Panc1 (cell line): ENCODE measurements at regions of chr2 and their contacts with region 1.

Region 1: GRCh38 chr2:165401285-165401852 is 68.1 kb upstream of the CSRNP3 start:
- DNase-seq: peak; percentile 18
- ATAC-seq: no peak
- H3K4me3 ChIP-seq: no peak overlapping the region
- H3K27ac ChIP-seq: no peak overlapping the region
- H3K4me1 ChIP-seq: no peaks in the 10 kb centered on the region
- H3K27me3 ChIP-seq: no peaks in the 10 kb centered on the region
- CTCF ChIP-seq: peak; percentile 70; the same call in 1 of the 2 replicates

Region 2: GRCh38 chr2:164992818-164993217 is 408.6 kb before region 1 on chr2:
- CTCF ChIA-PET with region 1: no interaction called
- POLR2A ChIA-PET with region 1: no interaction called
- in situ Hi-C with region 1: no loop called
- intact Hi-C with region 1: loop called (anchors 5 kb)
- DNase-seq: peak; percentile 12
- ATAC-seq: peak; percentile 56; the same call in 1 of the 2 replicates
- H3K4me3 ChIP-seq: no peak overlapping the region
- H3K27ac ChIP-seq: no peak overlapping the region
- H3K4me1 ChIP-seq: no peaks in the 10 kb centered on the region
- H3K27me3 ChIP-seq: no peaks in the 10 kb centered on the region
- CTCF ChIP-seq: peak; percentile 35; the same call in 1 of the 2 replicates

Region 3: GRCh38 chr2:165022781-165023180 is 378.6 kb before region 1 on chr2:
- CTCF ChIA-PET with region 1: no interaction called
- POLR2A ChIA-PET with region 1: no interaction called
- in situ Hi-C with region 1: no loop called
- intact Hi-C with region 1: no loop called
- DNase-seq: no peak
- ATAC-seq: no peak
- H3K4me3 ChIP-seq: no peak overlapping the region
- H3K27ac ChIP-seq: no peak overlapping the region
- H3K4me1 ChIP-seq: no peaks in the 10 kb centered on the region
- H3K27me3 ChIP-seq: no peaks in the 10 kb centered on the region
- CTCF ChIP-seq: no peak

Region 4: GRCh38 chr2:165348441-165348840 is 52.9 kb before region 1 on chr2:
- CTCF ChIA-PET with region 1: no interaction called
- POLR2A ChIA-PET with region 1: no interaction called
- in situ Hi-C with region 1: no loop called
- intact Hi-C with region 1: no loop called
- DNase-seq: no peak
- ATAC-seq: no peak
- H3K4me3 ChIP-seq: no peak overlapping the region
- H3K27ac ChIP-seq: no peak overlapping the region
- H3K4me1 ChIP-seq: no peaks in the 10 kb centered on the region
- H3K27me3 ChIP-seq: no peaks in the 10 kb centered on the region
- CTCF ChIP-seq: no peak

Region 5: GRCh38 chr2:165361514-165361913 is 39.9 kb before region 1 on chr2:
- CTCF ChIA-PET with region 1: no interaction called
- POLR2A ChIA-PET with region 1: no interaction called
- in situ Hi-C with region 1: no loop called
- intact Hi-C with region 1: no loop called
- DNase-seq: no peak
- ATAC-seq: no peak
- H3K4me3 ChIP-seq: no peak overlapping the region
- H3K27ac ChIP-seq: no peak overlapping the region
- H3K4me1 ChIP-seq: no peaks in the 10 kb centered on the region
- H3K27me3 ChIP-seq: no peaks in the 10 kb centered on the region
- CTCF ChIP-seq: no peak

Region 6: GRCh38 chr2:165691615-165692014 is 290.2 kb after region 1 on chr2:
- CTCF ChIA-PET with region 1: no interaction called
- POLR2A ChIA-PET with region 1: no interaction called
- in situ Hi-C with region 1: no loop called
- intact Hi-C with region 1: loop called (anchors 5 kb)
- DNase-seq: no peak
- ATAC-seq: no peak
- H3K4me3 ChIP-seq: no peak overlapping the region
- H3K27ac ChIP-seq: no peak overlapping the region
- H3K4me1 ChIP-seq: no peaks in the 10 kb centered on the region
- H3K27me3 ChIP-seq: no peaks in the 10 kb centered on the region
- CTCF ChIP-seq: no peak

Region 7: GRCh38 chr2:165874445-165875039 is 473.2 kb after region 1 on chr2:
- CTCF ChIA-PET with region 1: no interaction called
- POLR2A ChIA-PET with region 1: no interaction called
- in situ Hi-C with region 1: no loop called
- intact Hi-C with region 1: loop called (anchors 2 kb)
- DNase-seq: no peak
- ATAC-seq: peak; percentile 66; the same call in 1 of the 2 replicates
- H3K4me3 ChIP-seq: no peak overlapping the region
- H3K27ac ChIP-seq: no peak overlapping the region
- H3K4me1 ChIP-seq: no peaks in the 10 kb centered on the region
- H3K27me3 ChIP-seq: no peaks in the 10 kb centered on the region
- CTCF ChIP-seq: peak; percentile 61; the same call in 1 of the 2 replicates